ENCODE measurements at regions of chr16 and their contacts with region 1.

Region 1: DNA sequence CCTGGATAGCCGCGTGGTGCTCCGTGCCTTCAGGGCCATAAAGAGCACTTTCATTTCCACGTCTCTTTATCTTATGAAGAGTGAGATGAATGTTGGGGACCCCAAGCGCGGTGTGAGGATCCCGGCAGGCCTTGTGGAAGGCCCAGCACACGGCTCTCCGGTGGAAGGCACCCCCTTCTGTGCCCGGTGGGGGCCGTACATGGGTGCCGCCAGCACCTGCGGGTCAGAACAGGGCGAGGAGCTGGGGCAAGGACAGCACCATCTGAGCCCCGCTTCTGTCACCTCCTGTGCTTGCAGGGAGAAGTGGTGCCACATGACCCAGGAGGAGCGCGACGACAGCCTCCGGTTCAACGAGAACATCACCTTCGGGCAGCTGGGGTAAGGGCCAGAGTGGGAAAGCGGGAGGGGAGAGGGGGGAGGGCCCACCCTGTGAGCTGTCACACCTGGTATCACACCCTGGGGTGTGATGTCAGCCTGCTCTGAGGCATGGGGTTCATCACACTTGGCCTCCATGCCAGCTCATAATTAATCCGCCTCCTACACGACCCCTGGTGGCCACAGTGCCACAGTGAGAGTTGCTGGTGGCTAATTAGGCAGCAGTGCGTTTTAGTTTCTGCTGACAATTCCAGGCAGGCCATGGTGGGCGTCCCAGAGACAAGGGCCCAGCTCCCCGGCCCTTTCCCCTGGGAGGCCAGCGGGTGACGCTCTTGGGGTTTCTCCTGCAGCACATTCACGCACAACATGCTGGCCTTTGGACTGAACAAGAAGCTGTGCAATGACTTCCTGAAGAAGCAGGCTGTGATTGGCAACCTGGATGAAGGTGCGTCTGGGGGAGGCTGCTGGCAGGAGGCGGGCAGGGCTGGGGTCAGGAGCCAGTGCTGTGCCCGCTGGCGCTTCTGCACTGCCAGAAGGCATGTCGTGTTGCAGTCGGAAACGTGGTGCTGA is 25.7 kb downstream of the CIBAR2 start:
- DNase-seq: peak; percentile 49 to 83 (median 72)
- ATAC-seq: peak; percentile 77 to 81 (median 79)
- H3K4me3 ChIP-seq: no peak overlapping the region
- H3K4me3 Mint-ChIP-seq: no peak overlapping the region
- H3K27ac ChIP-seq: no peak overlapping the region
- H3K27ac Mint-ChIP-seq: no peak overlapping the region
- H3K4me1 ChIP-seq: peaks cover 21 to 38% of the 10 kb centered on the region in 2 experiments
- H3K4me1 Mint-ChIP-seq: peaks cover 25 to 35% (median 32%) of the 10 kb centered on the region in 3 donors
- H3K27me3 ChIP-seq: no peaks in the 10 kb centered on the region
- H3K27me3 Mint-ChIP-seq: no peaks in the 10 kb centered on the region

Region 2: GRCh38 chr16:84925092-84925772 is 161.4 kb before region 1 on chr16:
- CTCF ChIA-PET with region 1: no interaction called
- POLR2A ChIA-PET with region 1: no interaction called
- DNase-seq: peak in 34 of 35 experiments; percentile 12 to 76 (median 54)
- ATAC-seq: peak in 3 of 4 experiments; percentile 45 to 66 (median 50)
- H3K4me3 ChIP-seq: no peak overlapping the region
- H3K4me3 Mint-ChIP-seq: no peak overlapping the region
- H3K27ac ChIP-seq: no peak overlapping the region
- H3K27ac Mint-ChIP-seq: no peak overlapping the region
- H3K4me1 ChIP-seq: no peaks in the 10 kb centered on the region
- H3K4me1 Mint-ChIP-seq: peaks cover 0 to 5% (median 0%) of the 10 kb centered on the region in 3 donors
- H3K27me3 ChIP-seq: peaks cover 0 to 15% of the 10 kb centered on the region in 2 experiments
- H3K27me3 Mint-ChIP-seq: peaks cover 0 to 4% of the 10 kb centered on the region in 2 donors

Region 3: GRCh38 chr16:84970447-84971127 is 116.0 kb before region 1 on chr16:
- CTCF ChIA-PET with region 1: interaction called in 1 of 2 experiments, 13 read pairs
- POLR2A ChIA-PET with region 1: no interaction called
- DNase-seq: peak; percentile 46 to 88 (median 70)
- ATAC-seq: peak; percentile 89 to 95 (median 94)
- H3K4me3 ChIP-seq: no peak overlapping the region
- H3K4me3 Mint-ChIP-seq: no peak overlapping the region
- H3K27ac ChIP-seq: no peak overlapping the region
- H3K27ac Mint-ChIP-seq: no peak overlapping the region
- H3K4me1 ChIP-seq: peaks cover 0 to 6% of the 10 kb centered on the region in 2 experiments
- H3K4me1 Mint-ChIP-seq: peaks cover 4 to 6% (median 4%) of the 10 kb centered on the region in 3 donors
- H3K27me3 ChIP-seq: peaks cover 0 to 10% of the 10 kb centered on the region in 2 experiments
- H3K27me3 Mint-ChIP-seq: no peaks in the 10 kb centered on the region

Region 4: DNA sequence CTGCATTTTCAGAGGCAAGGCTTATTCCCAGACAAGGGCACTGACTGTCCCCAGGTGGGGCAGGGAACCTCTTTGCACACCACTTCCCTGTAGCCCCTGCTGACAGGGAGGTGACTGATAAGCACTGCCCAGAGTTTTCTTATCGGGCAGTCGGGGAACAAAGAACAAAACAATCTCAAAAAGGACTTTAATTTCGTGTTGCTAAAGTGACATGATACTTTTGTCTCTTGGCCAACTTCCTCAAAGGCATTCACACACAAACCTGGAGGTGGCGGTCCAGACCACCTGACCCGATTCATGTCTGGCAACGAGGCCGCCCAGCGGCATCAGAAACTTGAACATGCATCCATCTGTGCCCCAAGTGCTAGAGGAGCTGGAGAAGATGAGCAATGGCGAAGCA is 104.2 kb before region 1 on chr16:
- CTCF ChIA-PET with region 1: interaction called, 4 to 13 read pairs
- POLR2A ChIA-PET with region 1: no interaction called
- DNase-seq: peak in 19 of 35 experiments; percentile 6 to 37 (median 13)
- ATAC-seq: no peak
- H3K4me3 ChIP-seq: no peak overlapping the region
- H3K4me3 Mint-ChIP-seq: no peak overlapping the region
- H3K27ac ChIP-seq: no peak overlapping the region
- H3K27ac Mint-ChIP-seq: peak overlapping the region in 1 of 2 donors; percentile 52
- H3K4me1 ChIP-seq: no peaks in the 10 kb centered on the region
- H3K4me1 Mint-ChIP-seq: peaks cover 15 to 16% (median 16%) of the 10 kb centered on the region in 3 donors
- H3K27me3 ChIP-seq: no peaks in the 10 kb centered on the region
- H3K27me3 Mint-ChIP-seq: no peaks in the 10 kb centered on the region

Region 5: DNA sequence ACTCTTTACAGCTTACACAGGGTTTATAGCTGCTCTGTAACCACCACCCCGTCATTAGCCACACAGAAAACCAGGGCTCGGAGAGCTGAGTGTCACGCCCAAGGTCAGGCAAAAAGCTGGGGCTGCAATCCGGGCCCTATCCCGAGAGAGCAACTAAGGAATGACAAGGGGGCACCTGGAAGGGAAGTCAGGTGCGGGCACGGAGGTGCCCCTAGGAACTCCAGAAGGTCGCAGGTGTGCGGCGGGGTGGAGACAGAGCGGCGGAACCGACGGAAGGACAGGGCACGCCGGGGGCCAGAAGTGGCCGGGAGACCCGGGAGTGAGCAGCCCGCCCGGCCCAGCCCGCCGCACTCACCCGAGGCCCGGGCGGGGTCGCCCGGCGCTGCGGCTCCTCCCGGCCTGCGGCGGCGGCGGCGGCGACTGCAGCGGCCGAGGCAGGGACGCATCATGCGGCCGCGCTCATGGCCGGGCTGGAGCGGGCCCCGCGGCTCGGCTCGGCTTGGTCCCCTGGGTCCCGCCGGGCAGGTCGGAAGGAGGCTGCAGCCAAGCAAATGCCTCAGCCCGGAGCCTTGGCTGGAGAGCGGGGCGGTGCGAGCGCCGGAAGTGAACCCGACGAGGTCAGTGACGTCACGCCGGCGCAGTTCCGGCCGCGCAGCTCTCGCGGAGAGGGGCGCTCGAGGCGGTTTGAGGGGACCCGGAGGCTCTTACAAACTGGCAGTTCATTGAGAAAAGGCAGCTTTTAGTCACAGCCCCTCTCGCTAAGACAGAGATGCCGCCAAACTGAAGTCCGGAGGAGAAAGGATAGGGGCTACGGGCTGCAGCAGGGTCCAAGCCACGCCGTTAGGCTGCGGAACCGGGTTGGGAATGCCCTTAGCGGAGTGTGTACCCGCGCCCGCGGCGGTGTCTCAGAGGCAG is 75.4 kb before region 1 on chr16 and contains the start of gene ZDHHC7:
- CTCF ChIA-PET with region 1: interaction called in 1 of 2 experiments, 12 read pairs
- POLR2A ChIA-PET with region 1: interaction called, 4 to 7 read pairs
- DNase-seq: peak; percentile 67 to 94 (median 81)
- ATAC-seq: peak; percentile 93 to 96 (median 94)
- H3K4me3 ChIP-seq: peak within 1 kb of the TSS; percentile 97 to 98
- H3K4me3 Mint-ChIP-seq: peak within 1 kb of the TSS; percentile 95 to 97 (median 97)
- H3K27ac ChIP-seq: peak within 1 kb of the TSS; percentile 99
- H3K27ac Mint-ChIP-seq: peak within 1 kb of the TSS; percentile 97
- H3K4me1 ChIP-seq: peaks cover 5 to 24% of the 10 kb centered on the region in 2 experiments
- H3K4me1 Mint-ChIP-seq: peaks cover 40 to 45% (median 44%) of the 10 kb centered on the region in 3 donors
- H3K27me3 ChIP-seq: peaks cover 0 to 3% of the 10 kb centered on the region in 2 experiments
- H3K27me3 Mint-ChIP-seq: no peaks in the 10 kb centered on the region
- total RNA-seq, gene ZDHHC7: 33.5 to 43.9 (median 38.7) TPM

Region 6: GRCh38 chr16:85027349-85027957 is 59.2 kb before region 1 on chr16 and contains the start of gene KIAA0513:
- CTCF ChIA-PET with region 1: interaction called, 5 to 16 read pairs
- POLR2A ChIA-PET with region 1: interaction called in 1 of 2 experiments, 4 read pairs
- DNase-seq: peak; percentile 84 to 98 (median 93)
- ATAC-seq: peak; percentile 74 to 82 (median 80)
- H3K4me3 ChIP-seq: peak within 1 kb of the TSS; percentile 60 to 84
- H3K4me3 Mint-ChIP-seq: peak within 1 kb of the TSS; percentile 90 to 91 (median 91)
- H3K27ac ChIP-seq: peak within 1 kb of the TSS; percentile 79
- H3K27ac Mint-ChIP-seq: peak within 1 kb of the TSS; percentile 82 to 92
- H3K4me1 ChIP-seq: peaks cover 17 to 34% of the 10 kb centered on the region in 2 experiments
- H3K4me1 Mint-ChIP-seq: peaks cover 25 to 42% (median 35%) of the 10 kb centered on the region in 3 donors
- H3K27me3 ChIP-seq: no peaks in the 10 kb centered on the region
- H3K27me3 Mint-ChIP-seq: no peaks in the 10 kb centered on the region
- total RNA-seq, gene KIAA0513: 9.2 to 19.7 (median 17.2) TPM

Measured in T-cell (primary cell).